Mammary epithelial cell (primary cell): ENCODE measurements at regions of chr7 and their contacts with region 1.

Region 1: GRCh38 chr7:23597094-23598091 is at the start of gene CCDC126:
- DNase-seq: peak; percentile 88
- H3K4me3 ChIP-seq: peak within 1 kb of the TSS; percentile 60 to 83 (median 78)
- H3K27ac ChIP-seq: peak within 1 kb of the TSS; percentile 55
- H3K4me1 ChIP-seq: peaks cover 20% of the 10 kb centered on the region
- H3K27me3 ChIP-seq: no peaks in the 10 kb centered on the region
- CTCF ChIP-seq: no peak
- total RNA-seq, gene CCDC126: 6.8 to 21.7 TPM

Region 2: DNA sequence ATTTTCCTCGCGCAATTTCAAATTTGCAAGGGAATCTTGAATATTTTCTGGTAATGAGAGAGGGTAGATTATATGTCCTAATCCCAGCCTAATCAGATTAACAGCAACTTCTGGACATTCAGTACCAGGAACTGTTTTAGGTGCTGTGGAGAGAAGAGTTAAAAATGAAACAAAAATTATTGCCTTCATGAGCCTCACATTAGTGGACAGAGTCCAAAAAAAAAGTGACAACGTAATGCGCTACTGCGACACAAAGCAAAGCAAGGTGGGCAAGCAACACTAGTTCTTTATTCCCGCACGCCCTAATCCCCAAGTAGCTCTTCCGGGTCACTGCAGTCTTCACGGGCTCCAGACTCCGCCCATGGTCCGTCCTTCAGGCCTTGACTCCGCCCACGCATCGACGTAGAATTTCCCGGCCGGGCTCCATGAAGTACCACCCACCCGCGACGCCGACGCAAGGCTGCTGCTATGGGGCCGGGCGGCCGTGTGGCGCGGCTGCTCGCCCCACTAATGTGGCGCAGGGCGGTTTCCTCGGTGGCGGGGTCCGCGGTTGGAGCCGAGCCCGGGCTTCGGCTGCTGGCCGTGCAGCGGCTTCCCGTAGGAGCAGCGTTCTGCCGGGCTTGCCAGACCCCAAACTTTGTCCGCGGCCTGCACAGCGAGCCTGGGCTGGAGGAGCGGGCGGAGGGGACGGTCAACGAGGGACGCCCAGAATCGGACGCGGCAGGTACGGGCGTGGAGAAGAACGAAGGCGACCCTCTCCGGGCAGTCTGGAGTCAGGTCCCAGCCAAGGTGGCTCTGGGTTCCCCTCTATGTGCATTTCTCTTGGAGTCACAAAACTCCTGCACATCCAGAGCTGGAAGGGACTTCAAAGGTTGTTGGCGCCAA is 298.3 kb before region 1 on chr7 and contains the start of gene MALSU1:
- CTCF ChIA-PET with region 1: no interaction called
- dilution Hi-C with region 1: no loop called
- in situ Hi-C with region 1: no loop called
- intact Hi-C with region 1: no loop called
- DNase-seq: peak; percentile 93
- H3K4me3 ChIP-seq: peak within 1 kb of the TSS; percentile 87 to 96 (median 92)
- H3K27ac ChIP-seq: peak within 1 kb of the TSS; percentile 63
- H3K4me1 ChIP-seq: peaks cover 18% of the 10 kb centered on the region
- H3K27me3 ChIP-seq: no peaks in the 10 kb centered on the region
- CTCF ChIP-seq: no peak
- total RNA-seq, gene MALSU1: 42.2 to 65.0 TPM

Region 3: DNA sequence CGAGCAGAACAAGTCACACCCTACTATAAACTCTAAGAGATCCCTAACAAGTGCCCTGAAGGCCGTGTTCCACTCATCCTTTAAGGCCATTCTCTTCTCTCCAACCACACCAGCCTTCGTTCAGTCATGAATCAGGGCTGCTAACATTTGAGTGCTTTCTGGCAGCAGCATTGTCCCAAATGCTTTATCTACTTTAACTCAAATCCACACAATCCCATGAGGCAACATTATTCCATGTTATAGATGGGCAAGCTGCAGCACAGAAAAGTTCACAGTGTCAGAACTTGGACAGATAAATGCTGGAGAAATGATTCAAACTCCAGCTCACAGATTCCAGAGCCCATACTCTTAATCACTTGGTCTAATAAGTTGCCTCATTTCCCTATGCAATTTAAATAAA is 224.8 kb before region 1 on chr7:
- CTCF ChIA-PET with region 1: no interaction called
- dilution Hi-C with region 1: no loop called
- in situ Hi-C with region 1: no loop called
- intact Hi-C with region 1: no loop called
- DNase-seq: no peak
- H3K4me3 ChIP-seq: no peak overlapping the region
- H3K27ac ChIP-seq: no peak overlapping the region
- H3K4me1 ChIP-seq: no peaks in the 10 kb centered on the region
- H3K27me3 ChIP-seq: no peaks in the 10 kb centered on the region
- CTCF ChIP-seq: no peak

Region 4: GRCh38 chr7:23696916-23697441 is 99.6 kb after region 1 on chr7:
- CTCF ChIA-PET with region 1: no interaction called
- dilution Hi-C with region 1: no loop called
- in situ Hi-C with region 1: no loop called
- intact Hi-C with region 1: loop called (anchors 5 kb)
- DNase-seq: peak; percentile 29
- H3K4me3 ChIP-seq: no peak overlapping the region
- H3K27ac ChIP-seq: no peak overlapping the region
- H3K4me1 ChIP-seq: peaks cover 8% of the 10 kb centered on the region
- H3K27me3 ChIP-seq: no peaks in the 10 kb centered on the region
- CTCF ChIP-seq: peak; percentile 70 to 82